Caco-2 (cell line): ENCODE measurements at regions of chr19 and their contacts with region 1.

Region 1: DNA sequence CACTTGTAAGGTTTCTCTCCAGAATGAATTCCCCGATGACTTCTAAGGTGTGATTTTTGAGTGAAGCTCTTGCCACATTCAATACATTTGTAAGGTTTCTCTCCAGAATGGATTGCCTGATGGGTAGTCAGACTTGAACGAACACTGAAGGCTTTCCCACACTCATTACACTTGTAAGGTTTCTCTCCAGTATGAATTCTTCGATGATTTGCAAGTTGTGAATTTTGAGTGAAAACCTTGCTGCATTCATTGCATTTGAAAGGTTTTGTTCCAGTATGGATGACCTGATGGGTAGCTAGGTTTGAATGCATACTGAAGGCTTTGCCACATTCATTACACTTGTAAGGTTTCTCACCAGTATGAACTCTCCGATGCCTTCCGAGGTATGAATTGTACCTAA is 24.3 kb downstream of the ERVV-2 start:
- DNase-seq: no peak
- H3K4me3 ChIP-seq: no peak overlapping the region
- H3K4me3 Mint-ChIP-seq: no peak overlapping the region
- H3K27ac Mint-ChIP-seq: no peak overlapping the region
- H3K4me1 ChIP-seq: no peaks in the 10 kb centered on the region
- H3K4me1 Mint-ChIP-seq: no peaks in the 10 kb centered on the region
- H3K27me3 ChIP-seq: no peaks in the 10 kb centered on the region
- H3K27me3 Mint-ChIP-seq: no peaks in the 10 kb centered on the region
- CTCF ChIP-seq: no peak

Region 2: GRCh38 chr19:53103198-53103944 is 34.5 kb after region 1 on chr19 and contains the start of gene ZNF160:
- CTCF ChIA-PET with region 1: no interaction called
- POLR2A ChIA-PET with region 1: no interaction called
- intact Hi-C with region 1: no loop called
- DNase-seq: peak; percentile 99
- H3K4me3 ChIP-seq: peak within 1 kb of the TSS; percentile 100
- H3K4me3 Mint-ChIP-seq: peak within 1 kb of the TSS; percentile 83
- H3K27ac Mint-ChIP-seq: peak within 1 kb of the TSS; percentile 76
- H3K4me1 ChIP-seq: no peaks in the 10 kb centered on the region
- H3K4me1 Mint-ChIP-seq: peaks cover 13% of the 10 kb centered on the region
- H3K27me3 ChIP-seq: no peaks in the 10 kb centered on the region
- H3K27me3 Mint-ChIP-seq: no peaks in the 10 kb centered on the region
- CTCF ChIP-seq: no peak
- total RNA-seq, gene ZNF160: 30.6 and 33.3 TPM in 2 replicates

Region 3: GRCh38 chr19:53130506-53130905 is 61.7 kb after region 1 on chr19:
- CTCF ChIA-PET with region 1: no interaction called
- POLR2A ChIA-PET with region 1: no interaction called
- intact Hi-C with region 1: no loop called
- DNase-seq: no peak
- H3K4me3 ChIP-seq: no peak overlapping the region
- H3K4me3 Mint-ChIP-seq: no peak overlapping the region
- H3K27ac Mint-ChIP-seq: no peak overlapping the region
- H3K4me1 ChIP-seq: peaks cover 7% of the 10 kb centered on the region
- H3K4me1 Mint-ChIP-seq: peaks cover 18% of the 10 kb centered on the region
- H3K27me3 ChIP-seq: no peaks in the 10 kb centered on the region
- H3K27me3 Mint-ChIP-seq: no peaks in the 10 kb centered on the region
- CTCF ChIP-seq: no peak

Region 4: DNA sequence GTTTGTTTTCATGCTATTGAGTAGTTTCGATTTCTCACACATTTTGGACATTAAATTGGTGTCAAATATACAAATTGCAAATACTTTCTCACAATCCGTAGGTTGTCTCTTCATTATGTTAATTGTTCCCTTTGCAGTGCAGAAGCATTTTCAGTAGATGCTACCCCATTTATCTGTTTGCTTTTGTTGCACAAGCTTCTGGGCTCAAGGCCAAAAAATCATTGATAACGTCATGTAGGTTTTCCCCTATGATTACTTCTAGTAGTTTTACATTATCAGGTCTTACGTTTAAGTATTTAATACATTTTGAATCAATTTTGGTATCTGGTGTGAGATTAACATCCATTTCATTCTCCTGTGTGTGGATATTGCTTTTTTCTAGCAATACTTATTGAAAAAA is 104.1 kb after region 1 on chr19:
- CTCF ChIA-PET with region 1: no interaction called
- POLR2A ChIA-PET with region 1: no interaction called
- intact Hi-C with region 1: loop called (anchors 5 kb)
- DNase-seq: no peak
- H3K4me3 ChIP-seq: no peak overlapping the region
- H3K4me3 Mint-ChIP-seq: no peak overlapping the region
- H3K27ac Mint-ChIP-seq: no peak overlapping the region
- H3K4me1 ChIP-seq: no peaks in the 10 kb centered on the region
- H3K4me1 Mint-ChIP-seq: no peaks in the 10 kb centered on the region
- H3K27me3 ChIP-seq: no peaks in the 10 kb centered on the region
- H3K27me3 Mint-ChIP-seq: no peaks in the 10 kb centered on the region
- CTCF ChIP-seq: no peak